Heart right ventricle (tissue), 16 donors: ENCODE measurements at regions of chr12 and their contacts with region 1.

Region 1: DNA sequence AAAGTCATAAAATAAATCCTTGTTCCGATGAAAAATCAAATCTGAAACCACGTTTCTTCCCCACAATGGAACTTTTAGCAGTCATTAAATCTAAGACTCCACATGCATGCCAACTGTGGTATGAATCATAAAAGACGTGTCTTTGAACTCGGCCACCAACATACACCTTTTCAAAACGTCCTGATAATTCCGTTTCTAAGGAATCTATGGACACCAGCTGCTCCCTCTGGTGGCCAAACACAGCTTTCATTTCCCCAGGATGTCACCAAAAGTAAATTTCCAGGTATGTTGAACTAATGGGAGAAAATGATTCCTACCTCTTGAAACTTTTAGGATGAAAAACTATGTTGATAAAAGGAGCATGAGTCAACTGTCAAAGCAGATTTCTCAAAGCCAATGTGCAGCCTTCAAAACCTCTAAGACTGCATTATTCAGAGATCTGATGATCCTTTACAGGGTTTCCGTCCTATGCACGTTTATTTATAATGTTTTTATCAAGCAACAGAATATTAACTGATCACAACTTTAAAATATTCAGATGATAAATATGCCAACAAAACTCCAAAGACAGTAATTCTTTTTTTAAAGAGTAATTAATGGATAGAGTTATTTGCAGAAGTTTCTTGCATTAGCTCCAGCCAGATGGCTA is 96.2 kb downstream of the CIT start:
- DNase-seq: peak in 1 of 2 donors; percentile 30
- ATAC-seq: no peak
- H3K4me3 ChIP-seq: no peak overlapping the region
- H3K27ac ChIP-seq: no peak overlapping the region
- H3K4me1 ChIP-seq: peaks cover 0 to 3% (median 0%) of the 10 kb centered on the region in 9 donors
- H3K27me3 ChIP-seq: no peaks in the 10 kb centered on the region
- CTCF ChIP-seq: peak; percentile 68 to 88 (median 82)

Region 2: GRCh38 chr12:119659289-119659897 is 121.5 kb before region 1 on chr12:
- intact Hi-C with region 1: loop called in 4 of 10 experiments (anchors 2 to 10 kb)
- DNase-seq: no peak
- ATAC-seq: no peak
- H3K4me3 ChIP-seq: no peak overlapping the region
- H3K27ac ChIP-seq: no peak overlapping the region
- H3K4me1 ChIP-seq: peaks cover 0 to 11% (median 0%) of the 10 kb centered on the region in 9 donors
- H3K27me3 ChIP-seq: no peaks in the 10 kb centered on the region
- CTCF ChIP-seq: peak; percentile 68 to 95 (median 88)

Region 3: DNA sequence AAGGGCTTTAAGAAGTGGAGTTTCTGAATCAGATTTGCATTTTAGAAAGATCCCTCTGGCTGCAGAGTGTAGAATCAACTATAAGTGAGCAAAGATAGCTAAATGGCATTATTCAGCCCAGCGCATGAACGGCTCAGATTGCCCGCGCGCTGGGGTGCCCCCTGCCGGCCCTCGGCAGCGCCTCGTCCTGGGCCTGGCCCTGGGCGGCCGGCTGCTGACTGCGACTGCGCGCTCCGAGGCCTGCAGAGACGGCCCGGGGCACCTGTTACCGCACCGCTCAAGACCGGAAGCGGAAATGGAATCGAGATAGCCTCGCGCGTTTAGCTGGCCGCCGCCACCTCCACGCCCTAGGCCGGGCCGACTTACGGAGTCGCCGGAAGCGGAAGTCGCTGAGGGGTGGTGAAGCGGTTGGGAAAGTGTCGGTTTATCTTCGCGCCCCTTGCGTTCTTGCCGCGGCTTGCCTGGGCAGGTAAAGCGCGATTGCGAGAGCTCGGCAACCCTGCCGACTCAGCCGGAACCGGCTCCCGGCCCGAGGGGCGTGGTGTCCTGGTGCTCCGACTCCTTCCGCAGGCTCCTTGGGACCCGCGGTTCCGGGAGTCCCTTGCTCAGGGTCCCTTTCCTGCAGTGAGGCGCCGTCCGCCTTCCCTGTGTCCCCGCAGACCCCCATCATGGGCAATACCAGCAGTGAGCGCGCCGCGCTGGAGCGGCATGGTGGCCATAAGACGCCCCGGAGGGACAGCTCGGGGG is 113.2 kb before region 1 on chr12 and contains the start of gene PRKAB1:
- intact Hi-C with region 1: loop called in 7 of 10 experiments (anchors 2 to 10 kb)
- DNase-seq: peak; percentile 94 to 95
- ATAC-seq: peak; percentile 99 to 100 (median 99)
- H3K4me3 ChIP-seq: peak within 1 kb of the TSS; percentile 64 to 99 (median 90)
- H3K27ac ChIP-seq: peak within 1 kb of the TSS; percentile 83 to 97 (median 94)
- H3K4me1 ChIP-seq: peaks cover 7 to 65% (median 48%) of the 10 kb centered on the region in 9 donors
- H3K27me3 ChIP-seq: no peaks in the 10 kb centered on the region
- CTCF ChIP-seq: peak; percentile 88 to 100 (median 91)
- total RNA-seq, gene PRKAB1: 8.6 to 14.5 (median 10.4) TPM

Region 4: DNA sequence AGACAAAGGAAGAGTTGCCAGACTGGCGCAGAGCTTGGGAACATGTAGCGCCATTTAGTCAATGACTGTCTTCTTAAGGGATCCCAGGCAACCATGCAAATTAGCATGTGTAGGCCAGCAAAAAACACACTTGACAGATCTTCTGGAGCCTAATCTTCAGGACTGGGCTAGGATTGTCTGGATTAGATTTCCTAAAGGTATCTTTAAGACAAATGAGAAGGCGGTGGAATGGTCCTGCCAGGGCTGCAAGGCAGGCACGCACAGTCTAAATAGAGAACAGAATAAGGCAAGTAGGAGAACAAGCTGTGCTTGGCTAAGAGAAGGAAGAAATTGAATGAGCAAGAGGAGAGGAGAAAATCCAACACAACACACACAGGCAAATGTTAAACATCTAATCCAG is 16.2 kb after region 1 on chr12:
- intact Hi-C with region 1: no loop called
- DNase-seq: no peak
- ATAC-seq: no peak
- H3K4me3 ChIP-seq: no peak overlapping the region
- H3K27ac ChIP-seq: no peak overlapping the region
- H3K4me1 ChIP-seq: no peaks in the 10 kb centered on the region
- H3K27me3 ChIP-seq: no peaks in the 10 kb centered on the region
- CTCF ChIP-seq: no peak

Region 5: DNA sequence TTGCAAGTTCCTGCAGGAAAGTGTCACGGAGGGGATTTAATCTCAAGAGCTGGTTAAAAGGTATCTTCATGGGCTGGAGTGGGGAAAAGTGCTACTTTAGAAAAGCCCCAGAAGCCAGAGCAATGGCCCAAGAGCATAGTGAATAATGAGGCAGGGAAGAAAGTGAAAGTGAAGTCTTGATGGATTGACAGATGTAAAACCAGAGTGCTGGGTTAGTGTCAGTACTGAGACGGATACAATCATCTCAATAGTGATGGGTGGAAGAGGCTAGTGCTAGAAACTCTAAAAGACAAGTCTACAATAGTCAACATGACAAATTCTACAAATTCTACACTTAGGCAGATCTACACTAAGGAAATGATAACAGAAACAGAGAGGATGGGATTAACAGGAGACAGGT is 28.1 kb after region 1 on chr12:
- intact Hi-C with region 1: loop called in 1 of 10 experiments (anchors 2 kb)
- DNase-seq: no peak
- ATAC-seq: no peak
- H3K4me3 ChIP-seq: no peak overlapping the region
- H3K27ac ChIP-seq: no peak overlapping the region
- H3K4me1 ChIP-seq: peaks cover 3 to 11% (median 9%) of the 10 kb centered on the region in 9 donors
- H3K27me3 ChIP-seq: peaks cover 0 to 3% (median 0%) of the 10 kb centered on the region in 7 donors
- CTCF ChIP-seq: no peak